ENCODE measurements at regions of chr19 and their contacts with region 1.

Region 1: GRCh38 chr19:19138169-19138981 is at the start of gene TMEM161A:
- DNase-seq: peak; percentile 97 to 98
- H3K4me3 ChIP-seq: peak within 1 kb of the TSS; percentile 87
- H3K27ac ChIP-seq: no peak within 1 kb of the TSS
- H3K4me1 ChIP-seq: peaks cover 9% of the 10 kb centered on the region
- H3K27me3 ChIP-seq: no peaks in the 10 kb centered on the region
- CTCF ChIP-seq: no peak
- total RNA-seq, gene TMEM161A: 41.1 and 53.6 TPM in 2 replicates

Region 2: DNA sequence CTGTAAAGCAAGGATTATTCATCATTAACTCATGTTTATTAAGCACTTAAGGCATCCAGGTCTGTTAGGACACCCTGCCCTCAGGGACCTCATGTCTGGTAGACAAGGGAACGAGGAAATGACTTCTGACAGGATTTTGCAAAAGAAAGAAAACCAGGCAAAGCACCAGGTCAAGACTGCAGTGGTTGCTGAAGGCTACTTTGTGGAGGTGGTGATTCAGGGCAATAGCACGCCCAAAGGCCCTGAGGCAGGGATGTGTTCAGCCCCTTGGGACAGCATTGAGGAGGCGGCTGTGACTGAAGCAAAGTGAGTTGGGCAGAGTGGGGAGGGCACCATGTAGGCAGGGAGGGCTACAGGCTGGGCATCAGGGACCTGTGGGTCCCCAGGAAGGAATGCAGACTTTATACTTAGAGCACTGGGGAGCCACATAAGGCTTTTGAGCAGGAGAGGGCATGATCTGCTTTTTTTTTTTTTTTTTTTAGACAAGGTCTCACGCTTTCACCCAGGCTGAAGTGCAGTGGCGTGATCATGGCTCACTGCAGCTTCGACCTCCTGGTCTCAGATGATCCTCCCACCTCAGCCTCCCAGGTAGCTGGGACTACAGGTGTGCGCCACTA is 186.6 kb before region 1 on chr19:
- CTCF ChIA-PET with region 1: interaction called, 21 read pairs
- POLR2A ChIA-PET with region 1: no interaction called
- intact Hi-C with region 1: no loop called
- DNase-seq: peak; percentile 70 to 100
- H3K4me3 ChIP-seq: no peak overlapping the region
- H3K27ac ChIP-seq: peak overlapping the region; percentile 75
- H3K4me1 ChIP-seq: peaks cover 31% of the 10 kb centered on the region
- H3K27me3 ChIP-seq: no peaks in the 10 kb centered on the region
- CTCF ChIP-seq: no peak

Region 3: GRCh38 chr19:19063183-19064097 is 74.9 kb before region 1 on chr19 and contains the start of gene SLC25A42:
- CTCF ChIA-PET with region 1: interaction called, 5 read pairs
- POLR2A ChIA-PET with region 1: no interaction called
- intact Hi-C with region 1: loop called (anchors 2 kb)
- DNase-seq: peak; percentile 99 to 100
- H3K4me3 ChIP-seq: peak within 1 kb of the TSS; percentile 56
- H3K27ac ChIP-seq: no peak within 1 kb of the TSS
- H3K4me1 ChIP-seq: peaks cover 34% of the 10 kb centered on the region
- H3K27me3 ChIP-seq: no peaks in the 10 kb centered on the region
- CTCF ChIP-seq: no peak
- total RNA-seq, gene SLC25A42: 5.8 and 6.9 TPM in 2 replicates

Region 4: GRCh38 chr19:19098703-19099632 is 39.4 kb before region 1 on chr19:
- CTCF ChIA-PET with region 1: no interaction called
- POLR2A ChIA-PET with region 1: no interaction called
- intact Hi-C with region 1: no loop called
- DNase-seq: peak; percentile 11 to 31
- H3K4me3 ChIP-seq: no peak overlapping the region
- H3K27ac ChIP-seq: no peak overlapping the region
- H3K4me1 ChIP-seq: peaks cover 52% of the 10 kb centered on the region
- H3K27me3 ChIP-seq: no peaks in the 10 kb centered on the region
- CTCF ChIP-seq: no peak

Region 5: GRCh38 chr19:19224852-19225494 is 86.6 kb after region 1 on chr19:
- CTCF ChIA-PET with region 1: no interaction called
- POLR2A ChIA-PET with region 1: interaction called, 19 read pairs
- intact Hi-C with region 1: no loop called
- DNase-seq: peak; percentile 57 to 76
- H3K4me3 ChIP-seq: peak overlapping the region; percentile 13; the same call in 1 of the 2 replicates
- H3K27ac ChIP-seq: no peak overlapping the region
- H3K4me1 ChIP-seq: no peaks in the 10 kb centered on the region
- H3K27me3 ChIP-seq: peaks cover 79% of the 10 kb centered on the region
- CTCF ChIP-seq: peak; percentile 62

Measured in PC-9 (cell line).